PC-3 (cell line): ENCODE measurements at regions of chr2 and their contacts with region 1.

Region 1: DNA sequence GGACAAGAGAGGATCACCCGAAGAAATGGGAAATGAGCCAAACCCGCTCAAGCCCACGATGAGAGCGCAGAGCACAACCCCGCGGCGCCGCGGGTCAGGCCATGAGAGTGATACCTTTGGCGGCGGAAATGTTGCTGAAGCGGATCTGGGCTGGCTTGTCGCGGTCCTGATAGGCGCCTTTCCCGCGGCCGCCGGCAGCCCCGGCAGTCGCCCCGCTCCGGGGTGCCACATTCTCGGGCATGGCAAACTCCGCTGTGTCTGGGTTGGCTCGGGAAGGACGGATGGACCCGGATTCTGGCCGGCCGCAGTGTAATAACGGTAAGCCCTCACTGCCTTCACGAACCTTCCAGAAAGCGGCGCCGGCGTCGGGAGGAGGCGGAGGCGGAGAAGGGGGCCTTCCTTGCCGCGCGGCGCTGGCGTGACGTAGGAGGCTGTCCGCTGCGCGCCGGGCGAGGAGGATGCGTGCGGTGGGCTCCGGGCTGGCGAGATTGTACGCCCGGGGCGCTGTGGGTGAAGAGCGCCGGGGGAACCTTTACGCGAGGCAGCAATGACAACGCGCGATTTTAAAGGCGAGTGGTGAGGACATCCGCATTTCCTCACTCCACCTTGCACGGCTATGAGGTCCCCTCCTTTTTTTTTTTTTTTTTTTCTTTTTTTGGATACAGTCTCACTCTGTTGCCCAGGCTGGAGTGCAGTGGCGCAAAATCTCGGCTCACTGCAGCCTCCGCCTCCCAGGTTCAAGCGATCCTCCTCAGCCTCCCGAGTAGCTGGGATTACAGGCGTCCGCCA is at the start of gene CCT4:
- DNase-seq: peak; percentile 81
- ATAC-seq: peak; percentile 79
- H3K4me3 ChIP-seq: peak within 1 kb of the TSS; percentile 99
- H3K27ac ChIP-seq: peak within 1 kb of the TSS; percentile 73
- H3K4me1 ChIP-seq: peaks cover 21% of the 10 kb centered on the region
- H3K27me3 ChIP-seq: no peaks in the 10 kb centered on the region
- CTCF ChIP-seq: no peak
- total RNA-seq, gene CCT4: 185 and 195 TPM in 2 replicates

Region 2: DNA sequence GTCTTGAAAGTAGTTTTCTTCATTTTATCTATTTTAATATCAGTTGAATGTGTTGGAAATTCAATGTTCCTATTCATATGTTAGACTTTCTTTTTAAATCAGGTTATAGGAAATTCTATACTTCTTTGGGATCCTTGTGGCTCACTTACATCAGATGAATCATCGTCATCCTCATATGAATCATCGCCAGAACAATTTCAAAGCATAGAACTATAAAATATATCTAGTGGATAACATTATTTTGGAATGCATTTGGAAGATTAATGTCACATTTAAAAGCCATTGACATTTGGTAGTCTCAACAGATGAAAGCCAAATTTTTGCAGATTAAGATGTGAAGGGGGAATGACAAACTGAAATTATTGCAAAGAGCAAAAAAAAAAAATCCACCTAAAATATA is 128.7 kb before region 1 on chr2:
- CTCF ChIA-PET with region 1: no interaction called
- POLR2A ChIA-PET with region 1: no interaction called
- intact Hi-C with region 1: no loop called
- DNase-seq: peak; percentile 79
- ATAC-seq: no peak
- H3K4me3 ChIP-seq: no peak overlapping the region
- H3K27ac ChIP-seq: peak overlapping the region; percentile 53
- H3K4me1 ChIP-seq: peaks cover 30% of the 10 kb centered on the region
- H3K27me3 ChIP-seq: no peaks in the 10 kb centered on the region
- CTCF ChIP-seq: no peak

Region 3: GRCh38 chr2:61770746-61771145 is 117.7 kb before region 1 on chr2:
- CTCF ChIA-PET with region 1: no interaction called
- POLR2A ChIA-PET with region 1: no interaction called
- intact Hi-C with region 1: no loop called
- DNase-seq: peak; percentile 87
- ATAC-seq: peak; percentile 87
- H3K4me3 ChIP-seq: peak overlapping the region; percentile 33; the same call in 1 of the 2 replicates
- H3K27ac ChIP-seq: peak overlapping the region; percentile 94
- H3K4me1 ChIP-seq: peaks cover 30% of the 10 kb centered on the region
- H3K27me3 ChIP-seq: no peaks in the 10 kb centered on the region
- CTCF ChIP-seq: no peak

Region 4: DNA sequence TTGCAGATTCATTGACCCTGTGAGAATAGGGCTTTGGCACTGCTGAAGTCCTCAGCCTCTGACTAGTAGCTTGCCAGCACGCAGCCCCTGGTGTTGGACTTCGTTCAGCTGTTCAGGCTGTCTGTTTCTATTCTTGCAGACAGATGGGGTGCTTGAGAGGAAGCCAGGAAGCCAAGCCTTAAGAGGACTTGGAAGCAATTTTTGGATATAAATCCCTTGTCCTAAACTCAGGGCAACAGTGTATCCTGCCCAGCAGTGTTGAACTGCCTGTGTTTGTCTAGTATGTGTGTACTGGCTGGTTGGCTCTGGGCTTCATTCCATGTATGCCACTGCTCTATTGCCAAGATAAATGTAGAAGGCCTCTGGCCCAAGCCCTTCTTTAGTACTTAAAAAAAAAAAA is 125.6 kb after region 1 on chr2:
- CTCF ChIA-PET with region 1: no interaction called
- POLR2A ChIA-PET with region 1: interaction called, 22 read pairs
- intact Hi-C with region 1: no loop called
- DNase-seq: peak; percentile 6
- ATAC-seq: peak; percentile 88
- H3K4me3 ChIP-seq: no peak overlapping the region
- H3K27ac ChIP-seq: no peak overlapping the region
- H3K4me1 ChIP-seq: no peaks in the 10 kb centered on the region
- H3K27me3 ChIP-seq: no peaks in the 10 kb centered on the region
- CTCF ChIP-seq: no peak

Region 5: GRCh38 chr2:62032096-62032495 is 143.6 kb after region 1 on chr2:
- CTCF ChIA-PET with region 1: no interaction called
- POLR2A ChIA-PET with region 1: no interaction called
- intact Hi-C with region 1: no loop called
- DNase-seq: no peak
- ATAC-seq: no peak
- H3K4me3 ChIP-seq: no peak overlapping the region
- H3K27ac ChIP-seq: no peak overlapping the region
- H3K4me1 ChIP-seq: no peaks in the 10 kb centered on the region
- H3K27me3 ChIP-seq: no peaks in the 10 kb centered on the region
- CTCF ChIP-seq: no peak

Region 6: GRCh38 chr2:62325398-62325797 is 436.9 kb after region 1 on chr2:
- CTCF ChIA-PET with region 1: no interaction called
- POLR2A ChIA-PET with region 1: no interaction called
- intact Hi-C with region 1: no loop called
- DNase-seq: no peak
- ATAC-seq: no peak
- H3K4me3 ChIP-seq: no peak overlapping the region
- H3K27ac ChIP-seq: no peak overlapping the region
- H3K4me1 ChIP-seq: no peaks in the 10 kb centered on the region
- H3K27me3 ChIP-seq: no peaks in the 10 kb centered on the region
- CTCF ChIP-seq: no peak